CD4-positive, alpha-beta memory T cell (primary cell): ENCODE measurements at regions of chr13 and their contacts with region 1.

Region 1: GRCh38 chr13:99436686-99437416 is 64.4 kb upstream of the TM9SF2 start:
- DNase-seq: peak; percentile 92 to 95 (median 94)
- H3K4me3 ChIP-seq: peak overlapping the region in 1 of 2 donors; percentile 15
- H3K4me3 Mint-ChIP-seq: peak overlapping the region; percentile 19 to 85 (median 52)
- H3K27ac ChIP-seq: no peak overlapping the region
- H3K27ac Mint-ChIP-seq: peak overlapping the region; percentile 48 to 100 (median 90)
- H3K4me1 ChIP-seq: peaks cover 57% of the 10 kb centered on the region
- H3K4me1 Mint-ChIP-seq: peaks cover 40 to 58% (median 51%) of the 10 kb centered on the region in 4 donors
- H3K27me3 ChIP-seq: no peaks in the 10 kb centered on the region
- H3K27me3 Mint-ChIP-seq: peaks cover 0 to 3% of the 10 kb centered on the region in 2 donors

Region 2: GRCh38 chr13:98717256-98717655 is 719.6 kb before region 1 on chr13:
- CTCF ChIA-PET with region 1: no interaction called
- POLR2A ChIA-PET with region 1: no interaction called
- intact Hi-C with region 1: no loop called
- DNase-seq: no peak
- H3K4me3 ChIP-seq: no peak overlapping the region
- H3K4me3 Mint-ChIP-seq: no peak overlapping the region
- H3K27ac ChIP-seq: no peak overlapping the region
- H3K27ac Mint-ChIP-seq: no peak overlapping the region
- H3K4me1 ChIP-seq: no peaks in the 10 kb centered on the region
- H3K4me1 Mint-ChIP-seq: no peaks in the 10 kb centered on the region
- H3K27me3 ChIP-seq: no peaks in the 10 kb centered on the region
- H3K27me3 Mint-ChIP-seq: peaks cover 2 to 6% of the 10 kb centered on the region in 2 donors

Region 3: GRCh38 chr13:98900442-98900841 is 536.4 kb before region 1 on chr13:
- CTCF ChIA-PET with region 1: no interaction called
- POLR2A ChIA-PET with region 1: no interaction called
- intact Hi-C with region 1: no loop called
- DNase-seq: no peak
- H3K4me3 ChIP-seq: no peak overlapping the region
- H3K4me3 Mint-ChIP-seq: no peak overlapping the region
- H3K27ac ChIP-seq: no peak overlapping the region
- H3K27ac Mint-ChIP-seq: peak overlapping the region in 1 of 7 donors; percentile 20
- H3K4me1 ChIP-seq: no peaks in the 10 kb centered on the region
- H3K4me1 Mint-ChIP-seq: peaks cover 0 to 10% (median 2%) of the 10 kb centered on the region in 4 donors
- H3K27me3 ChIP-seq: no peaks in the 10 kb centered on the region
- H3K27me3 Mint-ChIP-seq: no peaks in the 10 kb centered on the region

Region 4: GRCh38 chr13:99176309-99177276 is 260.3 kb before region 1 on chr13:
- CTCF ChIA-PET with region 1: interaction called, 43 read pairs
- POLR2A ChIA-PET with region 1: interaction called, 5 read pairs
- intact Hi-C with region 1: loop called (anchors 1 kb)
- DNase-seq: peak; percentile 69 to 79 (median 75)
- H3K4me3 ChIP-seq: peak overlapping the region in 1 of 2 donors; percentile 19
- H3K4me3 Mint-ChIP-seq: peak overlapping the region in 7 of 8 donors; percentile 62 to 80 (median 71)
- H3K27ac ChIP-seq: no peak overlapping the region
- H3K27ac Mint-ChIP-seq: peak overlapping the region in 6 of 7 donors; percentile 37 to 81 (median 68)
- H3K4me1 ChIP-seq: peaks cover 44% of the 10 kb centered on the region
- H3K4me1 Mint-ChIP-seq: peaks cover 32 to 43% (median 36%) of the 10 kb centered on the region in 4 donors
- H3K27me3 ChIP-seq: no peaks in the 10 kb centered on the region
- H3K27me3 Mint-ChIP-seq: no peaks in the 10 kb centered on the region

Region 5: DNA sequence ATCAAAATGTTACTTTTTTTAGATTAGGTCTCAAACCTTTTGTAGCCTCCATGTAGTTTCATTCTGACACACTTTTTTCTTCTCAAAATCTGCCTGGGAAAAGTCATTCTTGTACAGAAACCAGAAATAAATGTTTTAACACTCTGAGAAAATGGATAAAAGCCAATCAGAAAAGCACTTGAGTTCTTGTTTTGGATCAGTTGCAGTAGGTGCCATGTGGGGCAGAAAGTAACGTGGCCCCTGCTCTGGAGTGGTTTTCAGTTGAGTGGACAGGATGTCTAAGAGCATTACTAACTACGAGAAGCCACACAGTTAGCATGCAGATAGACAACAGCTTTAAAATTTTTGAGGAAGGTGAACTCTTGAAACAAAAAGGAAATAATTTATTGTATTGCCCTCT is 148.8 kb before region 1 on chr13:
- CTCF ChIA-PET with region 1: interaction called, 19 read pairs
- POLR2A ChIA-PET with region 1: interaction called, 10 read pairs
- intact Hi-C with region 1: no loop called
- DNase-seq: no peak
- H3K4me3 ChIP-seq: no peak overlapping the region
- H3K4me3 Mint-ChIP-seq: peak overlapping the region; percentile 33 to 84 (median 60)
- H3K27ac ChIP-seq: peak overlapping the region; percentile 18
- H3K27ac Mint-ChIP-seq: peak overlapping the region; percentile 88 to 95 (median 89)
- H3K4me1 ChIP-seq: peaks cover 95% of the 10 kb centered on the region
- H3K4me1 Mint-ChIP-seq: peaks cover 65 to 100% (median 81%) of the 10 kb centered on the region in 4 donors
- H3K27me3 ChIP-seq: no peaks in the 10 kb centered on the region
- H3K27me3 Mint-ChIP-seq: no peaks in the 10 kb centered on the region

Region 6: DNA sequence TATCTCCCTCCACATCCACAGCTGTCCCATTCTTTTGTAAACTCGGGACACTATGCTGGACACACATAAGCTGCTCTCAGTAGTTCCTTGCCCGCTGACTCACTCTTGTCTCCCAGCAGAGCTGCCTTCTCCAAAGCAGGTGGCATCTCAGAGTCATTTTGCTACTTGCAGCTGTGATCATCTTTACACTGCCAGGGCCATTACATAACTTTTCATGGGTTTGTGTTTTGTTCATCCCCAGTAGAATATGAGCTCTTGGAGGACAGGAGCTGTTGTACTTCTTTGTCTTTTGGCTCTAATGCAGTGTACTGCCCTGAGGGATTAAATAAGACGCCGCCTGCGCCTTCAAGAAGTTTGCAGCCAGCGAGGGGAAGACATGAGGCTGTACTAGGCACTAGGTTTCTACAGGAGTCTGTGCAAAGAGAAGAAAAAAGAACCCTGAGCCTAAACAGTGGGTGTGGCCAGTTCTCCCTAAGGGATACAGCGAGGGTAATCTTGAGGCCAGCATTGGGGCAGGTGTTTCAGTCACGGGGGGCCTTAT is 88.9 kb before region 1 on chr13:
- CTCF ChIA-PET with region 1: interaction called, 66 read pairs
- POLR2A ChIA-PET with region 1: interaction called, 34 read pairs
- intact Hi-C with region 1: no loop called
- DNase-seq: no peak
- H3K4me3 ChIP-seq: no peak overlapping the region
- H3K4me3 Mint-ChIP-seq: peak overlapping the region in 5 of 8 donors; percentile 30 to 66 (median 56)
- H3K27ac ChIP-seq: peak overlapping the region; percentile 9
- H3K27ac Mint-ChIP-seq: peak overlapping the region; percentile 79 to 99 (median 94)
- H3K4me1 ChIP-seq: peaks cover 84% of the 10 kb centered on the region
- H3K4me1 Mint-ChIP-seq: peaks cover 79 to 98% (median 88%) of the 10 kb centered on the region in 4 donors
- H3K27me3 ChIP-seq: no peaks in the 10 kb centered on the region
- H3K27me3 Mint-ChIP-seq: no peaks in the 10 kb centered on the region

Region 7: GRCh38 chr13:99380921-99381645 is 55.8 kb before region 1 on chr13:
- CTCF ChIA-PET with region 1: interaction called, 253 read pairs
- POLR2A ChIA-PET with region 1: interaction called, 30 read pairs
- intact Hi-C with region 1: no loop called
- DNase-seq: peak in 4 of 5 donors; percentile 52 to 67 (median 61)
- H3K4me3 ChIP-seq: peak overlapping the region in 1 of 2 donors; percentile 0
- H3K4me3 Mint-ChIP-seq: peak overlapping the region in 7 of 8 donors; percentile 61 to 89 (median 73)
- H3K27ac ChIP-seq: peak overlapping the region; percentile 51
- H3K27ac Mint-ChIP-seq: peak overlapping the region; percentile 92 to 99 (median 96)
- H3K4me1 ChIP-seq: peaks cover 87% of the 10 kb centered on the region
- H3K4me1 Mint-ChIP-seq: peaks cover 70 to 97% (median 87%) of the 10 kb centered on the region in 4 donors
- H3K27me3 ChIP-seq: no peaks in the 10 kb centered on the region
- H3K27me3 Mint-ChIP-seq: no peaks in the 10 kb centered on the region

Region 8: GRCh38 chr13:99414048-99414995 is 22.5 kb before region 1 on chr13:
- CTCF ChIA-PET with region 1: interaction called, 122 read pairs
- POLR2A ChIA-PET with region 1: interaction called, 4 read pairs
- intact Hi-C with region 1: no loop called
- DNase-seq: no peak
- H3K4me3 ChIP-seq: no peak overlapping the region
- H3K4me3 Mint-ChIP-seq: no peak overlapping the region
- H3K27ac ChIP-seq: no peak overlapping the region
- H3K27ac Mint-ChIP-seq: no peak overlapping the region
- H3K4me1 ChIP-seq: peaks cover 15% of the 10 kb centered on the region
- H3K4me1 Mint-ChIP-seq: peaks cover 5 to 10% (median 8%) of the 10 kb centered on the region in 4 donors
- H3K27me3 ChIP-seq: no peaks in the 10 kb centered on the region
- H3K27me3 Mint-ChIP-seq: no peaks in the 10 kb centered on the region

Region 9: DNA sequence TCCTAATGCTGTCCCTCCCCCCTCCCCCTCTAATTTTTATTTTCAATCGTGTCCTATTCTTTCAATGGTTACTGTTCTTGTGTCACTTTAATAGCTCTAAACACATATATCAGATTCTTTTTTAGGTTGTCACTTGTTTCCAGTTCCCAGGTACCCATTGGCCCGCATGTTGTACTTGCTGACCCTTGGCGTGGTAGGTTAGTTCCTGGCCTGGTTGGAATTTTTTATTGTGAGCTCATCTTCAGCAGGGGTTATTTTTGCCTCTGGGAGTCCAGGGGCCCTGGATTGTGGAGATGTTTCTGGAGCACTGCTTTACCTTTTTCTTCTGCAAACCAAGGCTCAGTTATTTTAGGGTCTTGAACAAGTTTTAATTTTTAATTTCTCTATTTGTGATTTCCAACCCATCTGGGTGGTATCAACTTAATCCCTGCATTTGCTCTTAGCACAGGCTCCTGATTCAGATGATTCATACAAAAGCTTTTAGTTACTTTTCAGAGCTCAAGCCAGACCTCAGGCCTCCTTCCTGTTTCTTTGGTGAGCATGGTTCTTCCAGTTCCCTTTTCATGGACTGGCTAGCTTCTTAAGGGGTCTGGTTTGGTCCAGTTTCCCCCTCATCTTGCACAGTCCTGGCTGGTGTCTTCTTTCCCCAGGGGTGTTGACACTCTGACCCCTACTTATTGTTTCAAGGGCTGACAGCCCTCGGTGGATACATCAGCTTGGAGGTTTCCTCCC is 284.9 kb after region 1 on chr13:
- CTCF ChIA-PET with region 1: no interaction called
- POLR2A ChIA-PET with region 1: no interaction called
- intact Hi-C with region 1: no loop called
- DNase-seq: no peak
- H3K4me3 ChIP-seq: no peak overlapping the region
- H3K4me3 Mint-ChIP-seq: no peak overlapping the region
- H3K27ac ChIP-seq: no peak overlapping the region
- H3K27ac Mint-ChIP-seq: no peak overlapping the region
- H3K4me1 ChIP-seq: no peaks in the 10 kb centered on the region
- H3K4me1 Mint-ChIP-seq: peaks cover 0 to 3% (median 0%) of the 10 kb centered on the region in 4 donors
- H3K27me3 ChIP-seq: no peaks in the 10 kb centered on the region
- H3K27me3 Mint-ChIP-seq: no peaks in the 10 kb centered on the region